SK-N-SH (cell line): ENCODE measurements at regions of chr6 and their contacts with region 1.

Region 1: GRCh38 chr6:35522660-35523658 is 10.3 kb upstream of the TULP1 start:
- DNase-seq: peak; percentile 92
- H3K4me3 ChIP-seq: peak overlapping the region in 1 of 2 experiments; percentile 21; a peak in 1 of 4 replicates
- H3K27ac ChIP-seq: no peak overlapping the region
- H3K4me1 ChIP-seq: peaks cover 0 to 5% of the 10 kb centered on the region in 2 experiments; a peak in 1 of 4 replicates
- H3K27me3 ChIP-seq: no peaks in the 10 kb centered on the region
- CTCF ChIP-seq: peak; percentile 84
- EP300 ChIP-seq: no peak
- RAD21 ChIP-seq: peak; percentile 96

Region 2: GRCh38 chr6:35505999-35506412 is 17.0 kb before region 1 on chr6:
- CTCF ChIA-PET with region 1: interaction called, 11 read pairs
- POLR2A ChIA-PET with region 1: no interaction called
- DNase-seq: peak; percentile 31
- H3K4me3 ChIP-seq: no peak overlapping the region
- H3K27ac ChIP-seq: no peak overlapping the region
- H3K4me1 ChIP-seq: no peaks in the 10 kb centered on the region
- H3K27me3 ChIP-seq: no peaks in the 10 kb centered on the region
- CTCF ChIP-seq: no peak
- EP300 ChIP-seq: no peak
- RAD21 ChIP-seq: no peak

Region 3: GRCh38 chr6:35544523-35545313 is 21.8 kb after region 1 on chr6:
- CTCF ChIA-PET with region 1: interaction called, 25 read pairs
- POLR2A ChIA-PET with region 1: no interaction called
- DNase-seq: no peak
- H3K4me3 ChIP-seq: no peak overlapping the region
- H3K27ac ChIP-seq: no peak overlapping the region
- H3K4me1 ChIP-seq: no peaks in the 10 kb centered on the region
- H3K27me3 ChIP-seq: no peaks in the 10 kb centered on the region; the same call in 1 of the 2 replicates
- CTCF ChIP-seq: no peak
- EP300 ChIP-seq: no peak
- RAD21 ChIP-seq: no peak

Region 4: DNA sequence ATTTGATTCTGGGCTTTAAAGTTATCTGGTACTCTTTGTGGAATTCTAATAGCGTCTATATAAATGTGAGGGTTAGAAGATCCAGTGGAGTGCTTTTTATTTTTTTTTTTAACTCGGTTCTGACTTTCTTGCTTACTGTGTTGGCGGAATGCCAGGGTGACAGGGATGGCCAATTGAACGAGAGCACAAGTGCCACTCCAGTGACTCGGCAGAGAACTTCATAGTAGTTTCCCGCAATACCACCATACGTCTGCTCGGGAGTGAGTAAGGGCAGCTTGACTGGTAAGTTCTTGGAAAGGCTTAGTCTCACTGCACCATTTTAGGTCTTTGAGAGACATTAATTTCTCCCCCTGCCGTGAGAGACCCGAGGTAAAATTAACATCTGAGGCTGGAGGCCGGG is 39.1 kb after region 1 on chr6:
- CTCF ChIA-PET with region 1: interaction called, 10 read pairs
- POLR2A ChIA-PET with region 1: no interaction called
- DNase-seq: no peak
- H3K4me3 ChIP-seq: no peak overlapping the region
- H3K27ac ChIP-seq: no peak overlapping the region
- H3K4me1 ChIP-seq: peaks cover 0 to 5% of the 10 kb centered on the region in 2 experiments; a peak in 1 of 4 replicates
- H3K27me3 ChIP-seq: peaks cover 4% of the 10 kb centered on the region
- CTCF ChIP-seq: no peak
- EP300 ChIP-seq: no peak
- RAD21 ChIP-seq: no peak

Region 5: DNA sequence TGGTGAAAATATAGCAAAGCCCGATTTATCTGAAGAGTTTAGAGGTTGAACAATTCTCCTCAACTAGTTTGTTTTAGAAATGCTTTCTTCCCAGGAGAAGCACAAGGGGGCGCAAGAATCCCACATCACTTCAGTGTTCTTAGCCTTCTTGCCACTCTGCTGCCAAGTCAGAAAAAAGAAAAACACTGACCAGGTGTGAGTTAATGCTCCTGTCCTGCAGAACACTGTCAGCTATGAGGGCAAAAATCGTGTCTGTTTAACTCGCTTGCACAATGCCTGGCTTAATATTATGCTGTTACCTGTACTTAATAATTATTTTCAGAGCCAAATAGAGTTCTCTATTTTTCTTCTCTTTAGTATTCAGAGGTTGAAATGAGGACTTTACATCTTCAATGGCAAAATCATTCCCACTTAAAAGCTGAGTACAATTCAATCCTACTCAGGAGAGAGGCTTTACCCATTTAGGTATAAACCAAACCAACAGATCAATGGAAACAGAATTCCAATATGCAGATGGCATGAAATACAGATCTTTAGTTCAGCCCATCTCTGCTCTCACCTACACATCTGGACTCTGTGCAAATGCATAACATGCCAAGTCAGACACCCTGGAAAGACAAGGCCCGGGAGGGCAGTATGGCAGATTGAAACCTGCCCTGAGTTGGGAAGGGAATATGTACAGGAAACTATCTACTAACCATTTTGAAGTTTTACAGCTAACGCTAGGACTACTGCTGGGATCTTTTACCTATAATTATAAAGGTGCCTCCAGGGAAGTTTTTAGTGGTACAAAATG is 61.1 kb after region 1 on chr6:
- CTCF ChIA-PET with region 1: interaction called, 34 read pairs
- POLR2A ChIA-PET with region 1: no interaction called
- DNase-seq: peak; percentile 52
- H3K4me3 ChIP-seq: no peak overlapping the region
- H3K27ac ChIP-seq: peak overlapping the region in 1 of 2 experiments; percentile 55; a peak in 2 of 4 replicates
- H3K4me1 ChIP-seq: peaks cover 4 to 13% of the 10 kb centered on the region in 2 experiments; a peak in 2 of 4 replicates
- H3K27me3 ChIP-seq: no peaks in the 10 kb centered on the region
- CTCF ChIP-seq: peak; percentile 91
- EP300 ChIP-seq: no peak
- RAD21 ChIP-seq: peak; percentile 97